ENCODE measurements at regions of chr1 and their contacts with region 1.

Region 1: DNA sequence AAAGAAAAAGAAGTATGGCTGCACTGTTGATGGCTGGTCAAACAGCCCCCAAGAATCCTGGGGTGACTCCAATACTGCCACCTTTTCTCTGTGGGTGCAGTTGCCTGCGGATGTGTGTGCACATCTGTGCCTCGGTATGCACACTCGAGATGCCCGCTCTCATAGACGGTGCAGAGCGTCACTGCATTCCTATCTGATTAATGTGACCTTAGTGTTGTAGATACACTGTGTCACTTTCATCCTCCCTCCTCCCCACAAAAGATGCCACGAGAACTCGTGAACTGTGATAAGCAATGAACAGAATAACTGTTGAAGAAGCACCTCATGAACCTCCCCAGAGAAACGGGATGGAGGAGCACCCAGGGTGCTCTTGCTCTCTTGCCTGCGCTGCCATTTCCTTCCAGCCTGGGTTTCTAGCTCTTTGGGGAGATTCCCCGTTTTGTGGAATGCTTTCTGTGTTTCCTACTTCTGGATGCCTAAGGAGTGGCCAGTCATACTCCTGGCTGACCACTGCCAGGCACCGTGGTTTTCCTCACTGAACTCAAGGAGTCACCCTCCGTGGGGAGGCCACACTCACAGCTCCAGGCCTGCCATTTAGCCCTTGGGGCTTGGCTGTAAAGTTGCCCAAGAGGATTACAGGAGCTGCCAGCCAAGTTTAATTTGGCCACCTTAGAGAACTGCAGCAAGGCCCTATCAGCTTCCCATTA is 32.0 kb downstream of the NTPCR start:
- DNase-seq: no peak

Region 2: GRCh38 chr1:232743999-232744398 is 238.4 kb before region 1 on chr1:
- intact Hi-C with region 1: loop called (anchors 5 kb)
- DNase-seq: no peak

Region 3: GRCh38 chr1:232822530-232822929 is 159.9 kb before region 1 on chr1:
- intact Hi-C with region 1: no loop called
- DNase-seq: no peak

Region 4: DNA sequence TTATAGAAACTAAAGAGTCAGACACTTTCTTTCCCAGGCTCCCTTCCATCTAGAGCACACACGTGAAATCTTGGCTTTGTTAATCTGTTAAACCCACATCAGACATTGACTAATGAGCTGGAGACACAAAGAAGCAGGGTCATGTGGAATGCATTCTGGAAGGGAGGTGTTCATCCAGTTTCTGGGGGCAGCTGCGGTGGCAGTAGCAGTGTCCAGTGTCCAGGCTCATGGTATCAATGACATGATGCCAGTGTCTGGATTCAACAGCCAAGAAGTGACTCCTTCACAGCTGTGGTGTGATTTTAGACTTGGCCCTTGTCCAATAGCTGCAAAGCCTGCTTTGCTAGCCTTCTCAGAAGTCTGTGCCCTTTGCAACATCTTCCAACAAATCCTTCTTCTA is 63.2 kb after region 1 on chr1:
- intact Hi-C with region 1: no loop called
- DNase-seq: no peak

Measured in posterior cingulate gyrus (tissue), 11 donors.